IMR-90 (cell line): ENCODE measurements at regions of chr5 and their contacts with region 1.

Region 1: GRCh38 chr5:143153332-143154119 is 250.0 kb downstream of the NR3C1 start:
- DNase-seq: peak; percentile 97
- ATAC-seq: peak; percentile 84
- H3K4me3 ChIP-seq: no peak overlapping the region
- H3K27ac ChIP-seq: peak overlapping the region; percentile 75; the same call in 1 of the 2 replicates
- H3K4me1 ChIP-seq: peaks cover 27% of the 10 kb centered on the region
- H3K27me3 ChIP-seq: no peaks in the 10 kb centered on the region
- CTCF ChIP-seq: no peak
- POLR2A ChIP-seq: no peak; the same call in 1 of the 2 replicates
- RAD21 ChIP-seq: peak; percentile 42; the same call in 1 of the 2 replicates

Region 2: DNA sequence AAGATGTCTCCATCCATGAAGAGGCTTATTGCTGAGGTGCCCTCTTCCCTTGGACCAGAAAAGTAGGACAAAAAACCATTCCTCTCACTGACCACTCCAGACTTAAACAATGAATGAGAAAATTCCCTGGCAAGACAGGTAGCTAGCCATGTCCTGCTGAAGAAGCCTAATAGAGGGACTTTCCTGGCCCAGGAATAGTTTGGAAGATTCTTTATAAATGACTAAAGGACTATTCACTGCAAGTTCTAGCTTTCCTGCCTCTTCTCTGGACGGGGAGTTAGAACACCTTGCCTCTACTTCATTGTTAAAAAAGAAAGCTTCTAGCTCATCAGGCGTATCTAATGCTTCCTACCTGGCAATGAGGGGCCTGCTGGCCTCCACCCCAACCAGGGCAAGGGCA is 96.3 kb after region 1 on chr5:
- CTCF ChIA-PET with region 1: no interaction called
- POLR2A ChIA-PET with region 1: interaction called, 16 read pairs
- dilution Hi-C with region 1: no loop called
- in situ Hi-C with region 1: no loop called
- intact Hi-C with region 1: no loop called
- DNase-seq: peak; percentile 26
- ATAC-seq: no peak
- H3K4me3 ChIP-seq: no peak overlapping the region
- H3K27ac ChIP-seq: peak overlapping the region; percentile 85; the same call in 1 of the 2 replicates
- H3K4me1 ChIP-seq: peaks cover 20% of the 10 kb centered on the region
- H3K27me3 ChIP-seq: no peaks in the 10 kb centered on the region
- CTCF ChIP-seq: no peak
- POLR2A ChIP-seq: no peak
- RAD21 ChIP-seq: no peak

Region 3: GRCh38 chr5:144170276-144171024 is 1016.9 kb after region 1 on chr5 and contains the starts of genes KCTD16 and YIPF5:
- CTCF ChIA-PET with region 1: no interaction called
- POLR2A ChIA-PET with region 1: no interaction called
- dilution Hi-C with region 1: no loop called
- in situ Hi-C with region 1: no loop called
- intact Hi-C with region 1: loop called (anchors 10 kb)
- DNase-seq: peak; percentile 96
- ATAC-seq: peak; percentile 98
- H3K4me3 ChIP-seq: peak within 1 kb of the TSS; percentile 80
- H3K27ac ChIP-seq: peak within 1 kb of the TSS; percentile 93
- H3K4me1 ChIP-seq: peaks cover 1% of the 10 kb centered on the region; the same call in 1 of the 2 replicates
- H3K27me3 ChIP-seq: no peaks in the 10 kb centered on the region
- CTCF ChIP-seq: no peak
- POLR2A ChIP-seq: peak; percentile 93
- RAD21 ChIP-seq: no peak
- total RNA-seq, gene KCTD16: 1.1 and 1.4 TPM in 2 replicates
- total RNA-seq, gene YIPF5: 172 and 192 TPM in 2 replicates